Prostate gland (tissue), 2 donors: ENCODE measurements at regions of chr15 and their contacts with region 1.

Region 1: DNA sequence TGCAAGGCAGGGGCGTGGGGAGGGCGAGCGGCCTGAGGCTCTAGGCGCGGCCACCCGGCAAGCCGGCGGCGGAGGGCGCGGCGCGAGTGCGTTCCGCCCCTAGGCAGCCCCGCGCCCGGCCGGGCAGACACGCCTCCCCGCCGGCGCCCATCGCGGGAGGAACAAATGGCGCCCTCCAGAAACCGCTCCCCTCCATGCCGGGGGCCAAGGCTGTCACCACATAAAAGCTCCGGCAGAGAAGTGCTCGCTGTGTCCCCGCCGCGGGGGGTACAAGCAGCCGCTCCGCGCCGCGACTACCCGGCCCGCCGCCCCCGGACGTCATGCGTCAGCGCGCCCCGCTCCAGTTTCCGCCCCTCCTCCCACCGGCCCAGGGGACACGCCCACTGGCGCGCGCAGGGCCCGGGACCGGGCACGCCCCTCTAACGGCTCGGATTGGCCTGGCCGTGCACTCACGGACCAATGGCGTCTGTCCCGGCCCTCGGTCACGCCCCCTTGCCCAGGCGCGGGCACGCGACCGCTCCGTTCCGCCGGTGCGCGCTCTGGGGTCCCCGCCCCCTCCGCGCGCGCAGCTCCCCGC is 391 bp upstream of the KLF13 start:
- DNase-seq: peak; percentile 98
- H3K4me3 ChIP-seq: peak overlapping the region; percentile 90 to 96
- H3K27ac ChIP-seq: peak overlapping the region; percentile 97 to 99
- H3K4me1 ChIP-seq: peaks cover 7% of the 10 kb centered on the region
- H3K27me3 ChIP-seq: no peaks in the 10 kb centered on the region
- CTCF ChIP-seq: no peak
- POLR2A ChIP-seq: peak; percentile 93

Region 2: DNA sequence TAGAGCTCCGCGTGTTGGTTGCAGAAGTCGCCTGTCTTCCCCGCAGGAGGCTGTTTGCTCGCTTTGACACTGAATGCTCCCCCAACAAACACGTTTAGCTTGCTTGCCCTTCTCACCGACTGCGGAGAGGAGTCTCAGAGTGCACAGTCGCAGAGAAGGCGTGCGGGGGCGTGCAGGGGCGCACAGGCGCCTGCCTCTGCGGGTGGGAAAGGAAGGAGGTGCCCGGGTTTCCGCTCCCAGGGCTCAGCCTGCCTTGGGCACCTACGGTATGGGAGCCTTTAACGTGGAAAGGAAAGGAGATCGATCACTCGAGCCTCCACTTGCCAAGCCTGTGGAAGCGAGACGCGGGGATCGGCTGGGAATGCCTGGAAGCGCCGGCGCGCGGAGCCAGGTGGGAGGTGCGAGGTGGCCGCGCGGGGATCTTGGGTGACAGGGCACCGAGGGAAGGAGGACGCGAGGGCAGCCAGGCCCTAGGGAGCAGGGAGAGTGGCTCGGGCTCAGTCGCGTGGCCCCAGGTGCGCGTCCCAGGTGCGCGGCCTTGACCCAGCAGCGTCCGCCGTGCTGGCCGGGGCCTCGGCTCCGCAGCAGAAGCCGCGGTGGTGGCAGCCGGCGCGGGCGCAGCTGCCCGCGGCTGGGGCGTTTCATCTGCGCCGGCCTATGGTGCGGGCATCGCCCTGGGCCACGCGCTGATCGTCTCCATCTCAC is 422.6 kb before region 1 on chr15 and contains the start of gene FAN1:
- intact Hi-C with region 1: loop called (anchors 10 kb)
- DNase-seq: peak; percentile 91
- H3K4me3 ChIP-seq: peak within 1 kb of the TSS; percentile 69
- H3K27ac ChIP-seq: peak within 1 kb of the TSS; percentile 81 to 82
- H3K4me1 ChIP-seq: no peaks in the 10 kb centered on the region
- H3K27me3 ChIP-seq: no peaks in the 10 kb centered on the region
- CTCF ChIP-seq: peak in 2 of 4 experiments; percentile 22 to 30
- POLR2A ChIP-seq: peak; percentile 60
- total RNA-seq, gene FAN1: 25.0 to 26.0 TPM

Region 3: DNA sequence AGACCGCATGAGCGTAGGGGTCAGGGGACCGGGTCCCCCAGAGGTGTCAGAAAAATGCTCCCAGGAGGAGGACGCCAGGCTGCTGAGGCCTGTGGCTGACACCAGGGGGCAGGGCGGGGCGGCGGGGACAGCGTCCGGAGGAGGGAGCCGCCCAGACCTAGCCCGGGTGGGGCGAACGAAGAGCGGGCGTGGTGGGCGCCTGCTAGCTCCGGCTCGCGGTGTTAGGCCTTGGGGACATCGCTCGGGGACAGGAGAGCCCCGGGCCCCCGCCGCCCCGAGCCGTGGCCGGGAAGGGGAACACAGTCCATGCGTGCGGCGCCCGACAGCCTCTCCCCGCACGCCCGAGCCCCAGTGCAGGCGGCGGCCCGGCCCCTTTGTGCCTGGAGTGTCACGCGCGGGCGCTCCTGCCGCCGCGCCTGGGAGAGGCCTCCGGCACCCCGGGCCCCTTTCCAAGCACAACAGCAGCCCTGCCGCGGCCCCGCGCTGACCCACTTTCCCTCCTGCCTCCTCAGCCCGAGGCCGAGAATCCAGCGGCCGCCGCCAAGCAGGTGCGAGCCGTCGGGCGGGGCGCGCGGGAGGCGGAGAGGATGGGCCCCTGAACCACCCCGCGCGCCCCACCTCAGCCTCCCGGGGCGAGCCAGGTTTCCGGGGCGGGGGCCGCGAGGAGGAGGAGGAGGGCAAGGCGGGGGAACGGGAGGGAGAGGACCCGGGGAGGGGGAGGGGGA is 110.6 kb before region 1 on chr15:
- intact Hi-C with region 1: loop called (anchors 5 kb)
- DNase-seq: peak; percentile 64
- H3K4me3 ChIP-seq: peak overlapping the region; percentile 36 to 48
- H3K27ac ChIP-seq: peak overlapping the region; percentile 87 to 88
- H3K4me1 ChIP-seq: peaks cover 16% of the 10 kb centered on the region
- H3K27me3 ChIP-seq: no peaks in the 10 kb centered on the region
- CTCF ChIP-seq: peak; percentile 78 to 86 (median 83)
- POLR2A ChIP-seq: no peak

Region 4: DNA sequence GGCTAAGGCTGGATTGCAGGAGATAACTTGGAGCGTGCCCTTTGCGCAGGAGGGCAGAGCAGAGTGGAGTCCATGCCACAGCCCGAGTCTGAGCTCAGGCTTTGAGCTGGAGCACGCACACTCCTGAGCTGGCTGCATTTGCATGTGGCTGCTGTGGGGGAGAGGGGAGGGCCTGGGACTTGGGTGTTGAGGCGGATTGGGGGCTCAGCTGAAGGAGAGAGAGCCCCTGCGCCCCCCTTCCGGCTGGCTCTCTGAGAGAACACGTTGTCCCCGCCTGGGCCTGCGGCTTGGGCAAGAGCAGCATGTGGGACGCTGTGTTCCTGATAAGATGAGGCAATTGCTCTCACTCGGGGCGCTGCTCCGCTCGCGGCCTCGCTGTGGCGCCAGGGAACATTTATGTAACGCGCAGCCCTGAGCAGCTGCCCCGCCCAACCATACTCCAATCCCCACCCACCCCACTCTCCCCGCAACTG is 39.4 kb after region 1 on chr15:
- intact Hi-C with region 1: loop called (anchors 5 kb)
- DNase-seq: peak; percentile 94
- H3K4me3 ChIP-seq: peak overlapping the region; percentile 11 to 12
- H3K27ac ChIP-seq: peak overlapping the region; percentile 60 to 84
- H3K4me1 ChIP-seq: peaks cover 10% of the 10 kb centered on the region
- H3K27me3 ChIP-seq: no peaks in the 10 kb centered on the region
- CTCF ChIP-seq: peak in 2 of 4 experiments; percentile 43 to 51
- POLR2A ChIP-seq: peak; percentile 13

Region 5: DNA sequence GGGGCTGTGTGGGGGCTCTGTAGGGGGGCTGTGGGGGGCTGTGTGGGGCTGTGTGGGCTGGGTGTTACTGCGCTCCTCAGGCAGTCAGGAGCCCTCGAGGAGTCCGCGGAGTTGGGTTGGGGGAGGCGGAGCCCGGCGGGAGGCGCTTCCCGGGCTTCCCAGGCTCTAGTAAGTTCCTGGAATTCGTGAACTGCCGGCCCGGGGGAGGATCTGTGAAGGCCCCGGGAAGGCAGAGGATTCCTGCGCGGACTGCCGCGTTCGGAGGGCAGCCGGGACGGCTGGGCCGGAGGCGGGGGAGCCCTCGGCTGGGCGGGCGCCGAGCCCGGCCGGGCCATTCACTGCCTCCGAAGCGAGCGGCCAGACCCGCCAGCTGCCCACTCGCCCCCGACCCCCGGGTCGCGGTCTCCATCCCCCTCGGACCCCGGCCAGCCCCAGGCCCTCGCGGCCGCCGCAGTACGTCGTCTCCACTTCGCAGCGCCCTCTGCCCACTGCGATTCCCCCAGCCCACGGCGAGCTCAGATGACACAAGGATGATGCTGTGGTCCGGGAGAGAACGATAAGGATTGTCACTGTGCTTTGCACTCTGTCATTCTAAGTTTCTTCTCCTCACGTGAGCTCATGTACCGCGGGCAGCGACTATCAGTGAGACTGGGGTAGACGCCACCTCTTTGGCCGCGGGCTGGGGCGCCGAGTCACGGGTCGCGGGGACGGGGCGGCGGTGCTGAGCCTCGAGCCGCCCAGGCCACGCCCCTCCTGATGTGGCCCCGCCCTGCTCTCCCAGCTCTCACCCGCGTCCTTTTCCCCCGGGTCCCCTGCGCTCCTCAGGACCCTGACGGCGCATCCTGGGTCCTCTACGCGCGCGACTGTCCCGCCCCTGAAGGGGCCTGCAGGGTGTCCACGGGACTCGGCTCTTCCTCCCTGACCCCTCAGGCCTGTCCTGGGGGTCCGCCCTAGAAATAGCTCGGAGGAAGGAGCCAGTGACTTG is 65.7 kb after region 1 on chr15:
- intact Hi-C with region 1: loop called (anchors 5 kb)
- DNase-seq: peak; percentile 75
- H3K4me3 ChIP-seq: peak overlapping the region; percentile 49 to 50
- H3K27ac ChIP-seq: peak overlapping the region; percentile 89 to 93
- H3K4me1 ChIP-seq: no peaks in the 10 kb centered on the region
- H3K27me3 ChIP-seq: no peaks in the 10 kb centered on the region
- CTCF ChIP-seq: no peak
- POLR2A ChIP-seq: peak; percentile 84

Region 6: GRCh38 chr15:31435261-31435911 is 109.1 kb after region 1 on chr15:
- intact Hi-C with region 1: loop called (anchors 2 kb)
- DNase-seq: peak; percentile 62
- H3K4me3 ChIP-seq: no peak overlapping the region
- H3K27ac ChIP-seq: peak overlapping the region; percentile 5 to 17
- H3K4me1 ChIP-seq: peaks cover 6% of the 10 kb centered on the region
- H3K27me3 ChIP-seq: no peaks in the 10 kb centered on the region
- CTCF ChIP-seq: peak; percentile 12 to 80 (median 62)
- POLR2A ChIP-seq: no peak